ENCODE measurements at regions of chr5 and their contacts with region 1.

Region 1: DNA sequence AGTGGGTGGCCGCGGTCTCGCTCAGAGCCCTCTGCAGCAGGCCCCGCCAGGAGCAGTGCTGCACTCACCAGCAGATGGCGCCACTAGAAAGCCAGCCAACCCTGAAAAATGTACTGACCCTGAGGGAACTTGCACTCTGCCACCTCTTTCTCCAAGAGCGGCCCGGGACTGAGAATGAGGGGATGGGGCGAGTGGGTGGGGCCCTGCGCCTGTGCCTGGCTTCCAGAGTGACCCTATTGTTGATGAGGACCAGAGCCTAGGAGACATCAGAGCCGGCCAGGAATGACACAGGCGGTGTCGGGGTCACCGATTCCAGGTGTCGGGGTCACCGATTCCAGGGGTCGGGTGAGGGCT is 2.9 kb upstream of the IL17B start:
- DNase-seq: no peak
- H3K4me3 ChIP-seq: peak overlapping the region; percentile 18
- CTCF ChIP-seq: peak; percentile 95

Region 2: DNA sequence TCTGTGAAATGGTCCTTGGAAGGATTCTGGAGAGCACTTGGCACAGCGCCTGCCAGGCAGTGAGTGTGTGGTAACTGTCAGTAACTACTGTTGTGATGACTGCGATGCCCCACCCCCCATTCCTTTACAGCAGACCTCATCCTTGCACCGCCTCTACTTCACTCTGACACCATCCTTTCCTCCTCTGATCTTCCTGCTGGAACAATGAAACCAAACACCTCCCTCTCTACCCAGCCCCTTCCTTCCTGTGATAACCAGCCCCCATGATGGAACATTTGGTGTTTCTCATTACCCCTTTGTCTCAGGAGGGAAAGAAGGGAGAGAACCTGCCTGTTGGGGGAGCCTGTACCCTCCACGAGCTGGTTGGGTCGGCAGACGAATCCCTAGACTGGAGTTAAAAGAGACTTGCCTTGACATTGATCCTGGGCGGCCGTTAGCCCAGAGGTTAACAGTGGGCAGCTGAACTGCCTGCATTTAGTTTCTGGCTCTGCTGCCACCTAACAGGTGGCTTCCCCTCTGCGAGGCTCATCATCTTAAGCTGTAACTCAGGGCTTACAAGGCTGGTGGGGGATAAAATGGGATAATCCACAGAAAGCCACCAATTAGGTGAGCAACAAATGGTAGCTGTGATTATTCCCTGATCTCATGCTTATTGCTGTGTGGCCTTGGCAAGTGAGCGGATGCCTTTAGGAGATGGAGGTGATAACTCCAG is 70.9 kb before region 1 on chr5:
- CTCF ChIA-PET with region 1: interaction called, 13 read pairs
- POLR2A ChIA-PET with region 1: no interaction called
- DNase-seq: no peak
- H3K4me3 ChIP-seq: no peak overlapping the region
- CTCF ChIP-seq: no peak

Region 3: GRCh38 chr5:149357370-149358293 is 24.3 kb before region 1 on chr5 and contains the start of gene PCYOX1L:
- CTCF ChIA-PET with region 1: interaction called, 470 read pairs
- POLR2A ChIA-PET with region 1: no interaction called
- DNase-seq: peak; percentile 63
- H3K4me3 ChIP-seq: peak within 1 kb of the TSS; percentile 73
- CTCF ChIP-seq: no peak

Region 4: GRCh38 chr5:149392718-149393117 is 10.8 kb after region 1 on chr5:
- CTCF ChIA-PET with region 1: interaction called, 470 read pairs
- POLR2A ChIA-PET with region 1: interaction called, 4 read pairs
- DNase-seq: no peak
- H3K4me3 ChIP-seq: no peak overlapping the region
- CTCF ChIP-seq: no peak

Region 5: DNA sequence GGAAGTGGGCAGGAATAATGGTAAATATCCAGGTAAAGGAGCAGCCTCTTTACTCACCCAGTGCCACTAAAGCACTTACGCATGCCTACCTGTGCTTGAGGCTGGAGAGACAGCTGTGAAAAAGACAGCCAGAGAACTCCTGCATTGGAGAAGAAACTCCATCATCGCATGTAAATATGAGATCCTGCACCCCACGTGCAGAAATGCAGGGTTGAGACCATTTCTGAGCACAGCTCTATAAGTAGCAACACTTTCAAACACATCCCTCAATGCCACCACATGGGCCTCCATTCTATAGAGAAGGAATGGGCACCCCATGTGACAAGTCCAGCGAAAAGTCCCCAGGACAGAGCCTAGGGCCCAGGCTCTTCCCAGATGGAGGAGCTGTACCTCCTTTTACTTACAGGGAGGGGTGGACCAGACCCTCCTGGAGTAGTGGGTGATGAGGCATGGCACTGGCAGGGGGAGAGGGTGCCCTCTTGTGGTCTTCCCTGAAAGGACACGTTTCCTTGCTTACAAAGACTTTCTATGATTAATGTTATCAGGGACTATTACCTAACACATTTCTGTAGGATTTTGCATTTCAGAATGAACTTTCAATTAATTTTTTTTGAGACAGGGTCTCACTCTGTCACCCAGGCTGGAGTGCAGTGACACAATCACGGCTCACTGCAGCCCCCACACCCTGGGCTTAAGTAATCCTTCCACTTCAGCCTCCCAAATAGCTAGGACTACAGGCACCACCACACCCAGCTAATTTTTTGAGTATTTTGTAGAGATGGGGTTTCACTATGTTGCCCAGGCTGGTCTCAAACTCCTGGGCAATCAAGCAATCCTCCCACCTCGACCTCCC is 52.4 kb after region 1 on chr5:
- CTCF ChIA-PET with region 1: interaction called, 737 read pairs
- POLR2A ChIA-PET with region 1: interaction called, 19 read pairs
- DNase-seq: no peak
- H3K4me3 ChIP-seq: no peak overlapping the region
- CTCF ChIP-seq: peak; percentile 86

Region 6: DNA sequence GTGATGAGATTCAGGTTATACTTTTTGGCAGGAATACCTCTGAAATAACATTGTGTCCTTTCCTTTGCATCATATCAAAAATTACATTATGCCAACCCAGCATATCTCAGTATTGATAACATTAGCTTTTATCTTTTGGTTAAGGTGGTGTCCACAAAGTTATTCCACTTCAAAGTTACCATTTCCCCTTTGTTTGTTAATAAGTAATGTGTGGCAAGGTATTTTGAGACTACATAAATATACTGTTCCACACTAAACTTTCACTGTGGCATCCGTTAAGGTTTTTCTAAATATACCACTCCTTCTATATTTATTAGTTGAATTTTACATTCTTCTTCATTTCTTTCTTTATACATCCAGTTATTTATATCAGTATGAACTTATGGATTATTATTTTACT is 185.3 kb after region 1 on chr5:
- CTCF ChIA-PET with region 1: interaction called, 30 read pairs
- POLR2A ChIA-PET with region 1: no interaction called
- DNase-seq: no peak
- H3K4me3 ChIP-seq: no peak overlapping the region
- CTCF ChIP-seq: no peak

Region 7: GRCh38 chr5:149618581-149619251 is 236.8 kb after region 1 on chr5:
- CTCF ChIA-PET with region 1: interaction called, 16 read pairs
- POLR2A ChIA-PET with region 1: no interaction called
- DNase-seq: no peak
- H3K4me3 ChIP-seq: no peak overlapping the region
- CTCF ChIP-seq: peak; percentile 72

Region 8: GRCh38 chr5:149757187-149757947 is 375.4 kb after region 1 on chr5:
- CTCF ChIA-PET with region 1: no interaction called
- POLR2A ChIA-PET with region 1: no interaction called
- DNase-seq: no peak
- H3K4me3 ChIP-seq: no peak overlapping the region
- CTCF ChIP-seq: no peak

Measured in AG04449 (cell line).